ENCODE measurements at regions of chr14 and their contacts with region 1.

Region 1: GRCh38 chr14:100221533-100222223 is 17.3 kb upstream of the YY1 start:
- DNase-seq: peak; percentile 82
- H3K4me3 Mint-ChIP-seq: no peak overlapping the region
- H3K27ac Mint-ChIP-seq: no peak overlapping the region
- H3K4me1 Mint-ChIP-seq: peaks cover 4% of the 10 kb centered on the region
- H3K27me3 Mint-ChIP-seq: no peaks in the 10 kb centered on the region

Region 2: DNA sequence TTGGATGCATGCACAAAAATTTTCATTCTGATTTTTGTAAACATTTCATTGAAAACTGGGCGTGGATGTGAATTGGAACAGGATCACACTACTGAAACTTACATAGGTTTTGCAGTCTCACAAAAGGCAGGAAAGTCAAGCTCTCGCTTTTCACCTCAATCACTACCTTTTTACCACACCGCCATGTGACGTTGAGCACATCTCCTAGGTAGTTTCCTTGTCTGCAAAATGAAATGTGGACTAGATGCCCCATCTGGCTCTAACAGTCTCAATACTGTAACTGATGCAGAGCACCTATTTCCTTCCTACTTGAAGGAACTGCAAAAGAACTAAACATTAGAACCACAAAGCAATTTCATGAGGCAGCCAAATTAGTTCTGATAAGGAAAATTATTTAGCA is 12.8 kb after region 1 on chr14:
- CTCF ChIA-PET with region 1: interaction called, 19 read pairs
- POLR2A ChIA-PET with region 1: interaction called, 64 read pairs
- intact Hi-C with region 1: loop called (anchors 1 kb)
- DNase-seq: no peak
- H3K4me3 Mint-ChIP-seq: no peak overlapping the region
- H3K27ac Mint-ChIP-seq: peak overlapping the region; percentile 9
- H3K4me1 Mint-ChIP-seq: peaks cover 46% of the 10 kb centered on the region
- H3K27me3 Mint-ChIP-seq: peaks cover 2% of the 10 kb centered on the region

Region 3: DNA sequence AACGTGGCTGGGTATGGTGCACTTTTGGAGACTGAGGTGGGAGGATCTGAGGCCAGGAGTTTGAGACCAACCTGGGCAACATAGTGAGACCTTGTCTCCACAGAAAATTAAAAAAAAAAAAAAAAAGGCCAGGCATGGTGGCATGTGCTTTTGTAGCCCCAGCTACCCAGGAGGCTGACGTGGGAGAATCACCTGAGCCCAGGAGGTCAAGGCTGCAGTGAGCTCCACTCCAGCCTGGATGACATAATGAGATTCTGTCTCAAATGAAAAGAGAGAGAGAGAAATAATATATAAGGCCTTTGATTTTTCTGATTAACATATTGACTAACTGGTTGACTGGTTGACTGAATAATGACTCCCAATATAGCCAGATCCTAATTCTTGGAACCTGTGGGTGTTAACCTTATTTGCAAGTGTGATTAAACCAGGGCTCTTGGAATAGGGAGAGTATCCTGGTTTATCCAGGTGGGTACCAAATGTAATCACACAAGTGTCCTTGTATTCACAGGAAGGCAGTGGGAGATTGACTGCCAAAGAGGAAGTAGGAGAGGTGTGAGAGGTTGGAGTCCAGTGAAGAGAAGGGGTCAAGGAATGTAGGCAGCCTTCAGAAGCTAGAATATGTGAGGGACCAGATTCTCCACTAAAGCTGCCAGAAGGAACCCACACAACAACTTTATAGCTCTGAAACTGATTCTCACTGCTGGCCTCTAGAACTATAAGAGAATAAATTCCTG is 29.2 kb after region 1 on chr14:
- CTCF ChIA-PET with region 1: no interaction called
- POLR2A ChIA-PET with region 1: no interaction called
- intact Hi-C with region 1: no loop called
- DNase-seq: no peak
- H3K4me3 Mint-ChIP-seq: no peak overlapping the region
- H3K27ac Mint-ChIP-seq: no peak overlapping the region
- H3K4me1 Mint-ChIP-seq: peaks cover 68% of the 10 kb centered on the region
- H3K27me3 Mint-ChIP-seq: no peaks in the 10 kb centered on the region

Measured in activated CD4-positive, alpha-beta memory T cell treated with anti-CD3 and anti-CD28 coated beads for 36 hours (primary cell).